ENCODE measurements at regions of chr16 and their contacts with region 1.

Region 1: DNA sequence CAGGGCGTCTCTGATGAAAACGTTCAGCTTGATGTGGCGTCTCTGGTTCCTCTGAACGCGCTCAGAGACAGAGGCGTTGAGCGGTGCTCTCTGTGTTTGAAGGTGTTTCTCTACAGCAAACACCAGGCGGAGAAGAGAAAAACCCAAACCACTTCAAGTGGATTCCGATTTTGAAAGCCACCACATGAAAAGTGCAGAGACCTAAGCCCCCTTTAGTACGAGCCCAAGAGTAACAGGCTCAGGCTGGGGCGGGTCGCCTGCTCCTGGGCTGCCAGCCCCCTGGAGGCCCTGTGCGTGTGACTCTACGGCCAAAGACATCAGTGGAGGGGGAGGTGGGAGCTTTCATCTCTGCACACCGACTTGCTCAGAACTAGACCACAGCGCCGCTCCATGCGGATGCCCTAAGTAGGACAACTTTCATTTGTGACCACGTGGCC is 328.4 kb downstream of the MAF start:
- DNase-seq: no peak
- H3K4me3 ChIP-seq: no peak overlapping the region
- H3K27ac ChIP-seq: no peak overlapping the region
- H3K4me1 ChIP-seq: no peaks in the 10 kb centered on the region
- H3K27me3 ChIP-seq: no peaks in the 10 kb centered on the region
- CTCF ChIP-seq: no peak
- POLR2A ChIP-seq: no peak

Region 2: DNA sequence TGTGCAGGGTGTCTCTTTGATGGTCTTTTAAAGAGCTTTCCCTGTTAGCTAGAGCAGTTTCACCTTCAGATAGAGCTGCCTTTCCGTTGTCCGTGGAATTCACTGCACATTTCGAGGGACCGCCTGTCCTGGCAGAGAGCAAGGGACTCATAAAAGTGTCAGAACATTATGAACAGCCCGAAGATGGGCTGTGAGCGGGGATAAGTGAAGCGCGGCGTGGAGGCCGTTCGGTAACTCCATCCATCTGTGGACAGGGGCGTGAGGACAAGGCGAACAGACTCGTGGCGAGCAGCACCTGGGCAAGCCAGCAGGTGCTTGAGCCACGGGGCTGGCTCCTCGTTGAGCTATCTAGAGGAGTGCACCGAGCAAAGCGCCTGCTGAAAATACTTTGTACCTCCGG is 42.8 kb before region 1 on chr16:
- intact Hi-C with region 1: no loop called
- DNase-seq: no peak
- H3K4me3 ChIP-seq: no peak overlapping the region
- H3K27ac ChIP-seq: no peak overlapping the region
- H3K4me1 ChIP-seq: no peaks in the 10 kb centered on the region
- H3K27me3 ChIP-seq: no peaks in the 10 kb centered on the region
- CTCF ChIP-seq: no peak
- POLR2A ChIP-seq: no peak

Region 3: GRCh38 chr16:79286646-79287423 is 14.7 kb after region 1 on chr16:
- intact Hi-C with region 1: no loop called
- DNase-seq: no peak
- H3K4me3 ChIP-seq: peak overlapping the region; percentile 6 to 62 (median 39)
- H3K27ac ChIP-seq: no peak overlapping the region
- H3K4me1 ChIP-seq: no peaks in the 10 kb centered on the region
- H3K27me3 ChIP-seq: no peaks in the 10 kb centered on the region
- CTCF ChIP-seq: no peak
- POLR2A ChIP-seq: no peak

Region 4: DNA sequence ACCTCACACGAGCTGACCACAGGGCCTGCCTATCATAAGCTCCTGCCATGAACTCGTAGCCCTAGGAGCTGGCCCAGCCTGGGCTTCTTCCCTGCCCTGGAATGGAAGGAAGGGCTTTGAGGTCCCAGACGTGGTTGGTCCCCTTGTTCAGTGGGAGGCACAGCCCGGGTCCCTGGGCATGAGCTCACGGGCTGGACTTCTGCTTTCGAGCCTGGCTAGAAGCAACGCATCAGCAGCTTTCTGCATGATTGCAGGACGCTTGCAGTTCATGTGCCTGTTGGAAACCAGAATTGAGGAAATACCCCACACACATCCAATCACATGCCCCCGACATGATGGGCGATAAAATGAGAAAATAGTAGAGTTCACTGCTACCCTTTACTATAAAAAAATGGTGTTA is 35.1 kb after region 1 on chr16:
- intact Hi-C with region 1: loop called (anchors 1 kb)
- DNase-seq: peak in 1 of 2 donors; percentile 21
- H3K4me3 ChIP-seq: no peak overlapping the region
- H3K27ac ChIP-seq: no peak overlapping the region
- H3K4me1 ChIP-seq: no peaks in the 10 kb centered on the region
- H3K27me3 ChIP-seq: no peaks in the 10 kb centered on the region
- CTCF ChIP-seq: no peak
- POLR2A ChIP-seq: no peak

Region 5: GRCh38 chr16:79318137-79318899 is 46.2 kb after region 1 on chr16:
- intact Hi-C with region 1: no loop called
- DNase-seq: no peak
- H3K4me3 ChIP-seq: no peak overlapping the region
- H3K27ac ChIP-seq: no peak overlapping the region
- H3K4me1 ChIP-seq: no peaks in the 10 kb centered on the region
- H3K27me3 ChIP-seq: no peaks in the 10 kb centered on the region
- CTCF ChIP-seq: no peak
- POLR2A ChIP-seq: no peak

Region 6: DNA sequence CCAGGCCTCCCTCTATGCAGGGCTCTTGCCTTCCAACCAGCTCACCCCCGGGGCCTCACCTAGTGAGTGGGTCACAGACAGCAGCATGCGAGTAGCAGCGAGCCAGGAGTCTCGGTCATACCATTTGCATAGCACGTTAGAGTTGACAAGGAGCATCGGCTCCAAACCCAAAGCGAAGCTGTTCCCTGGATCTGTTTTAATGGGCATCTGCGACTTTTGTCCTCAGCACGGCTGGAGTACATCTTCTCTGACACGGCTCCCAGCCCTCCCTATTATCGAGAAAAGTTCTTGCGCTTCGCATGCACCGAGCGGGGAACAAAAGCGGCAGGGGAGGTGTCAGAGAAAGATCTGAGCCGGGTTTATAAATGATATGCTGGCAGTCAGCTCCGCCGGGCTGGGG is 75.1 kb after region 1 on chr16:
- intact Hi-C with region 1: no loop called
- DNase-seq: no peak
- H3K4me3 ChIP-seq: no peak overlapping the region
- H3K27ac ChIP-seq: no peak overlapping the region
- H3K4me1 ChIP-seq: no peaks in the 10 kb centered on the region
- H3K27me3 ChIP-seq: no peaks in the 10 kb centered on the region
- CTCF ChIP-seq: no peak
- POLR2A ChIP-seq: no peak